ENCODE measurements at regions of chr1 and their contacts with region 1.

Region 1: DNA sequence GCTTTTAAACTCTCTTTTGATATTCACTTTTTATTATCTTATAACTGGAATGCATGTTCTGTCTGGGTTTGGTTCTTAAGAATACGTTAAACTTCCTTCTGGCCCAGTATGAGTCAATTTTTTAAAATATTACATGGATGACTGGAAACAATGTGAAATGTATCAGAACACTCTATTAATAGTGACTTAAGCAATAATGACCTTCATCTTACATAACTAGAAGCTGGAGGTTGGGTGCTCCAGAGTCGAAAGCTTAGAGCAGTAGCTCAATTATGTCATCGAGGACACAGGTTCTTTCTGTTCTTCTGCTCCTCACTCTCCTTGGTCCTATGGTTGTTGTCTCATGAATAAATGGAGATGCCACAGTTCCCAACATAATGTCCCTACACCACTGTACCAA is 91.6 kb upstream of the FOXD3 start:
- DNase-seq: no peak
- ATAC-seq: no peak
- H3K4me3 ChIP-seq: no peak overlapping the region
- H3K4me3 Mint-ChIP-seq: no peak overlapping the region
- H3K27ac ChIP-seq: no peak overlapping the region
- H3K27ac Mint-ChIP-seq: no peak overlapping the region
- H3K4me1 ChIP-seq: no peaks in the 10 kb centered on the region
- H3K4me1 Mint-ChIP-seq: no peaks in the 10 kb centered on the region
- H3K27me3 ChIP-seq: no peaks in the 10 kb centered on the region
- H3K27me3 Mint-ChIP-seq: peaks cover 0 to 7% of the 10 kb centered on the region in 2 donors
- CTCF ChIP-seq: no peak

Region 2: DNA sequence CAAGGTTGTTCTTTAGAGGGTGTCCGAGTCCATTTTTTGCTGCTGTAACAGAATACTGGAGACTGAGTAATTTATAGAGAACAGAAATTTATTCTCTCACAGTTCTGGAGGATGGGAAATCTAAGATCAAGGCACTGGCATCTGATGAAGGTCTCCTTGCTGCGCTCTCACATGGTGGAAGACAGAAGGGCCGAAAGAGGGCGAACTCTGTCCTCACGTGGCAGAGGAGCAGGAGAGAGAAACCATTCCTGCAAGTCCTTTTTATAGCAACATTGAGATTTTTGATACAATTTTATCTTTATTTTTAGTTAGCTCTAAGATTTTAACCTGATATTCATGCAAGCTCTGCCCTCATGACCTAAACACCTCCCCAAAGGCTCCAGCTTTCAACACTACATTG is 398.4 kb before region 1 on chr1:
- intact Hi-C with region 1: no loop called
- DNase-seq: no peak
- ATAC-seq: no peak
- H3K4me3 ChIP-seq: no peak overlapping the region
- H3K4me3 Mint-ChIP-seq: no peak overlapping the region
- H3K27ac ChIP-seq: no peak overlapping the region
- H3K27ac Mint-ChIP-seq: no peak overlapping the region
- H3K4me1 ChIP-seq: no peaks in the 10 kb centered on the region
- H3K4me1 Mint-ChIP-seq: no peaks in the 10 kb centered on the region
- H3K27me3 ChIP-seq: no peaks in the 10 kb centered on the region
- H3K27me3 Mint-ChIP-seq: no peaks in the 10 kb centered on the region
- CTCF ChIP-seq: no peak

Region 3: DNA sequence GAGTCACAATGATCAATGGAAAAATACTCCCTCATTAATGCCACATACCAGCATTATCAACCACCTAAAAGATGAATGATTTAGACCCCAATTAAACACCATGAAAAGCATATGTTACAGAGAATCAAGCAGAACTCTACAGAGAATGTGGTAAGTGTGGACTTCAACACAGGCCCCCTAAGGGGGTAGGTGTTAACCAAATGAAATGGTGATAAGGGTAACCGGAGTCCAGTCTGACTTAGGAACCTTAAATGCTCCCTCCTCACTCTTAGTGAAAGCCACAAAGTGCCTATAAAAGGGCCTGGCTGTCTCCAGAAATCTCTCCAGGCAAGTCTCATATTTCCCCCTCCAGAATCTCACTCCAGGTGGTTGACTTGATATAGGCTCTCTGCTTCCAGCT is 57.6 kb before region 1 on chr1:
- intact Hi-C with region 1: loop called (anchors 10 kb)
- DNase-seq: no peak
- ATAC-seq: no peak
- H3K4me3 ChIP-seq: no peak overlapping the region
- H3K4me3 Mint-ChIP-seq: no peak overlapping the region
- H3K27ac ChIP-seq: no peak overlapping the region
- H3K27ac Mint-ChIP-seq: no peak overlapping the region
- H3K4me1 ChIP-seq: no peaks in the 10 kb centered on the region
- H3K4me1 Mint-ChIP-seq: no peaks in the 10 kb centered on the region
- H3K27me3 ChIP-seq: no peaks in the 10 kb centered on the region
- H3K27me3 Mint-ChIP-seq: no peaks in the 10 kb centered on the region
- CTCF ChIP-seq: no peak

Measured in natural killer cell (primary cell).